Transverse colon (tissue), 4 donors: ENCODE measurements at regions of chr14 and their contacts with region 1.

Region 1: GRCh38 chr14:55638665-55639064 is 58.7 kb downstream of the KTN1 start:
- DNase-seq: no peak
- H3K4me3 ChIP-seq: no peak overlapping the region
- H3K27ac ChIP-seq: no peak overlapping the region
- H3K4me1 ChIP-seq: no peaks in the 10 kb centered on the region
- H3K27me3 ChIP-seq: no peaks in the 10 kb centered on the region
- CTCF ChIP-seq: no peak
- EP300 ChIP-seq: no peak
- POLR2A ChIP-seq: no peak

Region 2: DNA sequence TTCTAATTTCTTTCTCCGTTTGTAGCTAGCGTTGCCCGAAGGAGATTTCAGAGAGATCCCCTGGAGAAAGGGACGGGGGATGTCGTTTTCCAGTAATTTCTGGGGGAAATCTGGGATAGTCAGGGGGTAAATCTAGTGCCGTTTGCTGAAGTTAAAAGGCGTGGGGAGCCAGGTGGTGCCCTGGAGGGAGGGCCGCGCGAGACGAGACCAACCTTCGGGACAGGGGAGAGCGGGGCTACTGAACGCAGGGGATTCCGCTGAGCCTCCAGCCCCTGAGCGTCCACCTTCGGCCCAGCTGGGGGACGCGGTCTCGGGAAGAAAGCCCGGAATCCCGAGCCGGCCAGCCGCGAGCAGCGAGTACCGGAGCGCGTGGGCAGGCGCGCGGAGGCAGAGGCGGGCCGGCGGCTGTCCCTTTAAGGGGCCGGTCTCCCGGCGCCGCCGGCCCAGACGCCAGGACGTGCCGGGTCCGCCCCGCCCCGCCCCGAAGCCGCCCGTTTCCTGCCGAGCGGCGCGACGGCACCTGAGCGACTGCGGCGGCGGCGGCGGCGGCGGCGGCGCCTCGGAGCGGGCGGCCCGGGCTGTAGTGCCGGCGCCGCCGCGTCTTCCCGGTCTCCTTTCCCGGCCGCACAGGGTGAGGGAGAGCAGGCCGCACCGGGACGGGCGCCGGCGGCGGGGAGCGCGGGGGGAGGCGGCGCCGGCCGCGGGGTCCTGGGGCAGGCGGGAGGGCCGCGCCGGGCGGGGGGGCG is 58.8 kb before region 1 on chr14 and contains the start of gene KTN1:
- in situ Hi-C with region 1: no loop called
- intact Hi-C with region 1: loop called (anchors 2 kb)
- DNase-seq: peak; percentile 89
- H3K4me3 ChIP-seq: peak within 1 kb of the TSS; percentile 86 to 100 (median 95)
- H3K27ac ChIP-seq: peak within 1 kb of the TSS; percentile 95 to 99 (median 97)
- H3K4me1 ChIP-seq: peaks cover 14 to 45% (median 33%) of the 10 kb centered on the region in 4 donors
- H3K27me3 ChIP-seq: no peaks in the 10 kb centered on the region
- CTCF ChIP-seq: no peak
- EP300 ChIP-seq: no peak
- POLR2A ChIP-seq: peak; percentile 33
- total RNA-seq, gene KTN1: 101 to 279 (median 129) TPM